GM10248 (cell line): ENCODE measurements at regions of chr9 and their contacts with region 1.

Region 1: DNA sequence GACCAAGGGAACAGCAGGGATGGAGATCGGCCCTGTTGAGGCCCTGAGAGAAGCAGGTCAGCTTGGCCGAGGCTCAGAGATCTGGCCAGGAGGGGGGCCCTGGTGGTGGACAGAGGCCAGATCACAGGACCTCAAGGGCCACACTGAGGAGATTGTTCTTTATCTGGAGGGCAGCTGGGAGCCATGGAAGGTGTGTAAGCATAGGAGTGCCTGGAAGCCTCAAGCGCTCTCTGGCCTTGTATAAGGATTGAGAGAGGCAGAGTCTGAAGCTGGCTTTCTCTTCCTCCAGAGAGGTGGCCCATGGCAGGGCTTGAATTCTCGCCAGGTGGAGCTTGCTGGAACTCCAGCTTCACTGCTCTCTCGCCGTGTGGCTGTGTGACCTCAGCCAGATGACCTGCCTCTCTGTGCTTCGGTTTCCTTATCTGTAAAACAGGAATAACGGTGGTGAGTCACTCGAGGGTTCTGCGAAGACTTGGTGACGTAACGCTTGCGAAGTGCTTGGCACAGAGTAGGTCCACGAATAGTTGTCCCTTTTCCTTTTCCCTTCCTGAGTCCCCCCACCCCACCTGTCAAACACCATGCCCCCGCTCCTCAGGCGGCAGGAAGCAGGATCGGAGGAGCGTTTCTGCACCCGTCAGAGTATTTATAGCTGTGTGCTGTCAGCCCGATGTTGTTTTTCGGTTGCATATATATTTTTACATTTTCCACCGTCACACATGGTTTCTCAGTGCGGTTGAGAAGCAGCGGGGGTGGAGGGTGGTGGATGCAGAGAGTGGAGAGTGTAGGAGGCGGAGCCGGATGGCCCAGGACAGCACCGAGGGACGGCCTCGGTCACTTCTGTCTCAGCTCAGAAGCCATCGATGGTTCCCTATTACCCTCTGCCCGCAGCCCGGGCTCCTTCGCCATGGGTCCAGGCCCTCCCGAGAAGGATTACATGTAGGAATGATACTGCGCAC is 17.0 kb upstream of the CRB2 start:
- DNase-seq: peak; percentile 71
- CTCF ChIP-seq: no peak

Region 2: GRCh38 chr9:123322273-123323195 is 16.5 kb before region 1 on chr9:
- CTCF ChIA-PET with region 1: interaction called, 28 read pairs
- POLR2A ChIA-PET with region 1: interaction called, 9 read pairs
- DNase-seq: peak; percentile 48
- CTCF ChIP-seq: no peak

Region 3: DNA sequence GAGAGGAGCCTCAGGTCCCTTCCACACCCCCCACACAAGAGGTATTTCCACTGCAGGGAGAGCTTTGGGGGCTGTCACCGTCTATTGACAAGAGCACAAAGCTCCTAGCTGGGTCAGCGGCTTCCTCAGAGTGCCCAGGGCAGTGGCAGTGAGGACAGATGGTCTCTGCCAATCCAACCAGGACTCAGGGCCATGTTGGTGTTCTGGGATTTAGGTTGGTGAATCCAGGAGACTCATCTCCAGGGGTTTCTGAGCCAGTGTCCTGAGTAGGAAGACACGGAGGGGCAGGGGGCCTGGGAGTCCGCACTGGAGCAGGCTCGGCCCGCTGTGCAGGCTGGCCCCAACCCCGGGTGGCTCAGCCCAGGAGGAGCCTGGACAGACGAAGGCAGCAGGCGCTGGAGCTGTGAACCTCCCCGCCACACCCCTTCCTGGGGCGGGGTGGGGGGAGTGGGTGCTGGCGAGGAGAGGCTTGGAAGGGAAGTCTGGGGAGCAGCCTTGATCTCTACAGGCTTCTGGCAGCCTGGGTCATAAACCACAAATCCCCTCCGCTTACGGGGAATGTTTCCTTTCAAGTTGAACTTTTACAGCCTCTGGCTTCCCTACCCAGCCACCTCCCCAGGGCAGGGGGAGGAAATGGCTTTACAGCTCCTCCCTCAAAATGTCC is 36.6 kb after region 1 on chr9:
- CTCF ChIA-PET with region 1: no interaction called
- POLR2A ChIA-PET with region 1: no interaction called
- DNase-seq: no peak
- CTCF ChIP-seq: no peak